ENCODE measurements at regions of chr18 and their contacts with region 1.

Region 1: DNA sequence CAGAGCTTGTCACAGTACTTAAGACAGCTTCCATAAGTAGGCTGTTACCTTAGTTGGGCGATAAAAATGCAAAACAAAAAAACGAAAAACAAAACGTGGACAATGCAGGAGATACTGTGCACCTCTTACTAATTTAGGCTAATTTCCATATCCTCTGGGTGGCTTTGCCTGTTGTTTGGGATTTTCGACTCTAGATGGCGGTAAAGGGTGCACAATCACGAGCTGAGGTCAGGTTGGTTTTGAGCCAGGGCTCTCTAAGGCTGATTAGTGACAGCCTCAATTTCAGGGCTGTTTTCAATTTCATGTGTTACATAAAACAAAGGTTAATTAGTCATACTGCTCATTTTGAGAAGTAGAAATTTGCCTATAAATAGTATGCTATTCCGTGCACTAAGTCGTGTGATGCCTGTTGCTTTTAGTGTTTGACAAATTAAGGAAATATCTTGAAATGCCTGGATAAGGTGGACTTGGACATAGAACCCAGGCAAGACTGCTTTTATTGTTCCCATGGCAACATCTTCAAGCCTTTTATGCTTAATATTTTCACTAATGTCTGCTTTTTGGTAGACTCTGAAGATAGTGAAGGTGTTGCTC is 493.1 kb downstream of the SOCS6 start:
- DNase-seq: peak; percentile 38 to 59
- H3K4me3 ChIP-seq: no peak overlapping the region
- H3K4me3 Mint-ChIP-seq: no peak overlapping the region
- H3K27ac Mint-ChIP-seq: no peak overlapping the region
- H3K4me1 ChIP-seq: no peaks in the 10 kb centered on the region
- H3K4me1 Mint-ChIP-seq: no peaks in the 10 kb centered on the region
- H3K27me3 ChIP-seq: no peaks in the 10 kb centered on the region
- H3K27me3 Mint-ChIP-seq: peaks cover 16% of the 10 kb centered on the region
- CTCF ChIP-seq: peak; percentile 35 to 50

Region 2: DNA sequence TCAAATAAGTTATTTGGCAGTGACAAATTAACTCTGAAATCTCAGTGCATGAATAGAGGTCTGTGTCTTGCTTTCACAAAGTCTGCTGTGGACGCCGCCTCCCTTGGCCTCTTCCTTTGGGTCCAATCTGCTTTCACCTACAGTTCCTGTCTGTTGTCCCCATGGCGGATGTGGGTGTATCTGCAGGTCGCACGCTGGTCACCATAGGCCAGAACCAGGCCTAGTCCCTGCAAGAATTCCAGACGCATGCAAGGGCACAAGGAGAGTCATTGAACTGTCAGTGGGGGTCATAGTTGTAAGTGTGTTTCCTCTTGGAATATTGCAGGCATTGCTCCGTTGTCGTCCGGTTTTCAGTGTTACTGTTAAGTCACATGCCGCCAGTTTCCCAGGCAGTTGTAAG is 485.7 kb before region 1 on chr18:
- CTCF ChIA-PET with region 1: no interaction called
- POLR2A ChIA-PET with region 1: no interaction called
- intact Hi-C with region 1: no loop called
- DNase-seq: no peak
- H3K4me3 ChIP-seq: no peak overlapping the region
- H3K4me3 Mint-ChIP-seq: no peak overlapping the region
- H3K27ac Mint-ChIP-seq: no peak overlapping the region
- H3K4me1 ChIP-seq: peaks cover 5% of the 10 kb centered on the region; the same call in 1 of the 2 replicates
- H3K4me1 Mint-ChIP-seq: peaks cover 19% of the 10 kb centered on the region
- H3K27me3 ChIP-seq: no peaks in the 10 kb centered on the region
- H3K27me3 Mint-ChIP-seq: no peaks in the 10 kb centered on the region
- CTCF ChIP-seq: no peak

Region 3: GRCh38 chr18:70936160-70936559 is 154.2 kb after region 1 on chr18:
- CTCF ChIA-PET with region 1: no interaction called
- POLR2A ChIA-PET with region 1: no interaction called
- intact Hi-C with region 1: loop called (anchors 2 kb)
- DNase-seq: no peak
- H3K4me3 ChIP-seq: no peak overlapping the region
- H3K4me3 Mint-ChIP-seq: no peak overlapping the region
- H3K27ac Mint-ChIP-seq: no peak overlapping the region
- H3K4me1 ChIP-seq: no peaks in the 10 kb centered on the region
- H3K4me1 Mint-ChIP-seq: no peaks in the 10 kb centered on the region
- H3K27me3 ChIP-seq: no peaks in the 10 kb centered on the region
- H3K27me3 Mint-ChIP-seq: no peaks in the 10 kb centered on the region
- CTCF ChIP-seq: no peak